Caco-2 (cell line): ENCODE measurements at regions of chr5 and their contacts with region 1.

Region 1: DNA sequence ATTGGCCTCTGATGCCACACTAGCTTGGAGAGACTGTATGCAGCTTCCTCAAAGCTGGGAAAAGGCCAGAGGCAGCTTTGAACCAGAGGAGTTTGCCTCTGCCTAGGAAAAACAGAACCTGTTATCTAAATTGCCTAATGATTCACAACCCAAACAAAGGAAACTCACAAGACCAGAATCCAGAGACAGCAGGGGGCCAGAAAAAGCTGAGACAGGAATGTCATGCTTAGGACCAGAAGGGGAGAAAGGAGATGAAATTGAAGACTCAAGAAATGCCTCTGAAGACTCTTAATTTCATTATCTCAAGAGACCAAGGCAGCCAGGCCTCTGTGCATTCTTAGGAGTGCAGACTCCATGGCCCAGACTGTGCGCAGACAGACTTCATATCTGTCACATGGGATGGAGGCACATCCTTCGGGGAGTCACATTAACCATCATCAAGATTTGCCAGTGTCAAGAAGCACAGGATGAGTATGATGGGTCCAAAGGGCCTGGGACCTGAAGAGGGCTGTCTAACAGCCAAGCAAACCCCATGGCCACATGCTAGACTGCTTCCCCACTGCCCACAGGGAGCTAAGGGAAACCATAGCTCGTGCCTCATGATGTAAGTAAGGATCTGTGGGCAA is 57.3 kb downstream of the ARSB start:
- DNase-seq: peak; percentile 69 to 79
- H3K4me3 ChIP-seq: no peak overlapping the region
- H3K4me3 Mint-ChIP-seq: peak overlapping the region; percentile 11
- H3K27ac Mint-ChIP-seq: peak overlapping the region; percentile 79
- H3K4me1 ChIP-seq: peaks cover 29% of the 10 kb centered on the region
- H3K4me1 Mint-ChIP-seq: peaks cover 33% of the 10 kb centered on the region
- H3K27me3 ChIP-seq: no peaks in the 10 kb centered on the region
- H3K27me3 Mint-ChIP-seq: no peaks in the 10 kb centered on the region
- CTCF ChIP-seq: no peak

Region 2: DNA sequence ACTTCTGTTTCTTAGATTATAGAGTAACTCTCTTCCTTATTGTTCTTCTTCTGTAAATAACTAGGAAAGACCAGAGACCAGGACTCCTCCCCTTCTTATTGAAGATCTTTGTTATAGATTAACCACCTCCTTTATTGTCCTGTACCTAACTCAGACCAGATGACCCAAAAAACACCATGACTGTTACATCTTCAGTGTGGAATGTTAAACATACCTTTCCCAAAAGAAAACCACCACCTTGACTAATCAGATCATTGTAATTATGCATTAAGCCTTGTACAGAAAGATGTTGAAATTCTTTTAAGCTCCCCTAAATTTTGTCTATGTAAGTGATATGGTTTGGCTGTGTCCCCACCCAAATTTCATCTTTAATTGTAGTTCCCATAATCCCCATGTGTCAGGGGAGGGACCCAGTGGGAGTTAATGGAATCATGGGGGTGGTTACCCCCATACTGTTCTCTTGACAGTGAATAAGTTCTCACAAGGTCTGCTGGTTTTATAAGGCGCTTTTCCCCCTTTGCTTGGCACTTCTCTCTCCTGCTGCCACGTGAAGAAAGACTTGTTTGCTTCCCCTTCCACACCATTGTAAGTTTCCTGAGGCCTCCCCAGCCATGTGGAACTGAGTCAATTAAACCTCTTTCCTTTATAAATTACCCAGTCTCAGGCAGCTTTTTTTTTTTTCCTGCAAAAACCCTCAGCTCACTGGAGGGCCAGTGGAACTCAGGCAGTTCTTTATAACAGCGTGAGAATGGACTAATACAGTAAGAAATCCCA is 31.1 kb after region 1 on chr5:
- CTCF ChIA-PET with region 1: no interaction called
- POLR2A ChIA-PET with region 1: no interaction called
- intact Hi-C with region 1: loop called (anchors 1 kb)
- DNase-seq: peak in 1 of 2 experiments; percentile 35
- H3K4me3 ChIP-seq: no peak overlapping the region
- H3K4me3 Mint-ChIP-seq: peak overlapping the region; percentile 12
- H3K27ac Mint-ChIP-seq: peak overlapping the region; percentile 91
- H3K4me1 ChIP-seq: peaks cover 16% of the 10 kb centered on the region
- H3K4me1 Mint-ChIP-seq: peaks cover 21% of the 10 kb centered on the region
- H3K27me3 ChIP-seq: no peaks in the 10 kb centered on the region
- H3K27me3 Mint-ChIP-seq: no peaks in the 10 kb centered on the region
- CTCF ChIP-seq: no peak

Region 3: DNA sequence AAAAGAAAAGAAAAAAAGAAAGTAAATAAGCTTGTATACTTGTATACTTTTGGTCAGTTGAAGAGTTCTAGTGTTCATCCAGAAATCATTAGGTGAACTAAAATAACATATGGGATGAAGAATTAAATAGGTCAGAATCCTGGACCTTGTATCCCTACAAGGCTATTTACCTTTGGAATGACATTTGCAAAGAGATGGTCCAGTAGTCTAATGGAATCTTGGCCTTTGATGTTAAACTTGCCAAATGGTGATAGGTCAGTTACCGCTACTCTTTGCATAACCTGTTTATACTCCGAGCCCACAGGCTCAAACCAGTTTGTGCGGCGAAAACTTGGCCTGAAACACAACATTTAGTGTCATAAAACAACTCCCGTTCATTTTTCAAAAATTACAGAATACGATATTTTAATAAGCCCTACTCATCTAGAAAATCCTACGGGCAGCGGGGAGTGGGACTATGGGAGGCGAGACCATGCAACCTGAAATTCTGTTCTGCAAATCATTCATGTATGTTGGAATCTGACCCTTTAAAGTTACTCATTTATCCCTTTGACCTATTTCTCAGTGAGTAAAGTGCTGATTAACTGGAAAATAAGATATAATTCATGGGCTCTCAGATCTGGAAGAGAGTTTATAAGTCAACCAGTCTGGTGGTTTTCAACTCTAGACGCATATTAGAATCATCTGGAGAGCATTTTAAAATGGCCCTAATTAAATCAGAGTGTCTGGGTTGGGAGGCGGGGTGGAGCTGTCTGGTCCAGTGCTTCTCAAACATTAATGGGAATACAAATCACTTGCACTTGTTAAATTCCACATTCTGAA is 103.1 kb after region 1 on chr5:
- CTCF ChIA-PET with region 1: no interaction called
- POLR2A ChIA-PET with region 1: interaction called, 11 read pairs
- intact Hi-C with region 1: no loop called
- DNase-seq: no peak
- H3K4me3 ChIP-seq: no peak overlapping the region
- H3K4me3 Mint-ChIP-seq: no peak overlapping the region
- H3K27ac Mint-ChIP-seq: no peak overlapping the region
- H3K4me1 ChIP-seq: no peaks in the 10 kb centered on the region
- H3K4me1 Mint-ChIP-seq: no peaks in the 10 kb centered on the region
- H3K27me3 ChIP-seq: no peaks in the 10 kb centered on the region
- H3K27me3 Mint-ChIP-seq: no peaks in the 10 kb centered on the region
- CTCF ChIP-seq: no peak